ENCODE measurements at regions of chrX and their contacts with region 1.

Region 1: GRCh38 chrX:15202454-15203143 is 67.3 kb downstream of the ASB9 start:
- DNase-seq: no peak
- H3K4me3 Mint-ChIP-seq: no peak overlapping the region
- H3K27ac Mint-ChIP-seq: peak overlapping the region; percentile 76
- H3K4me1 Mint-ChIP-seq: peaks cover 35% of the 10 kb centered on the region
- H3K27me3 Mint-ChIP-seq: peaks cover 9% of the 10 kb centered on the region

Region 2: GRCh38 chrX:13376857-13377549 is 1825.6 kb before region 1 on chrX:
- intact Hi-C with region 1: loop called (anchors 10 kb)
- DNase-seq: no peak
- H3K4me3 Mint-ChIP-seq: no peak overlapping the region
- H3K27ac Mint-ChIP-seq: peak overlapping the region; percentile 27
- H3K4me1 Mint-ChIP-seq: peaks cover 41% of the 10 kb centered on the region
- H3K27me3 Mint-ChIP-seq: no peaks in the 10 kb centered on the region

Region 3: DNA sequence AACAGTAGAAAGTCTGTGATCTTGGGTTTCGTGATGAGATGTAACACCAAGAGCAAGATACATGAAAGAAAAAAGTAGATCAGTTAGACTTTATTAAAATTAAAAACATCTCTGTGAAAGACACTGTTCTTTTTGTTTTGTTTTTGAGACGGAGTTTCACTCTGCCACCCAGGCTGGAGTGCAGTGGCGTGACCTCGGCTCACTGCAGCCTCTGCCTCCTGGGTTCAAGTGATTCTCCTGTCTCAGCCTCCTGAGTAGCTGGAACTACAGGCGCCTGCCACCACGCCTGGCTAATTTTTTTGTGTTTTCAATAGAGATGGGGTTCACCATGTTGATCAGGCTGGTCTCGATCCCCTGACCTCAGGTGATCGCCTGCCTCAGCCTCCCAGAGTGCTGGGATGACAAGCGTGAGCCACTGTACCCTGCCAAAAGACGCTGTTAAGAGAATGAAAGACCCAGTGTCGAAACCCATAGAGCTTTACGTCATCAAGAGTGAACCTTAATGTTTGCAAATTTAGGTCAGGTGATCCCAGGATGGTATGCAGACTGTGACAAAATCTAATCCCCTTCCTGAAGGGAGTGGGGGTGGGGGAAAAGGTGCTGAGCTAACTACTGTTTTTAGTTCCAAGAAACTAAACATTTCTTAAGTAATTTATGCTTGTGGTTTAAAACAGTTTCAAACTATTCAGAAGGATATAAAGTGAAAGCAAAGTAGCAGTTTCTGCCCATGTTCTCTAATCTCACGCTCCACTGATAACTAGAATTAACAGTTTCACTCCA is 1460.0 kb before region 1 on chrX:
- intact Hi-C with region 1: loop called (anchors 5 kb)
- DNase-seq: peak; percentile 8
- H3K4me3 Mint-ChIP-seq: peak overlapping the region; percentile 51
- H3K27ac Mint-ChIP-seq: peak overlapping the region; percentile 55
- H3K4me1 Mint-ChIP-seq: peaks cover 21% of the 10 kb centered on the region
- H3K27me3 Mint-ChIP-seq: no peaks in the 10 kb centered on the region

Region 4: GRCh38 chrX:14209034-14209433 is 993.6 kb before region 1 on chrX:
- intact Hi-C with region 1: no loop called
- DNase-seq: no peak
- H3K4me3 Mint-ChIP-seq: no peak overlapping the region
- H3K27ac Mint-ChIP-seq: no peak overlapping the region
- H3K4me1 Mint-ChIP-seq: no peaks in the 10 kb centered on the region
- H3K27me3 Mint-ChIP-seq: no peaks in the 10 kb centered on the region

Region 5: GRCh38 chrX:14798805-14799397 is 403.7 kb before region 1 on chrX:
- intact Hi-C with region 1: loop called (anchors 5 kb)
- DNase-seq: no peak
- H3K4me3 Mint-ChIP-seq: no peak overlapping the region
- H3K27ac Mint-ChIP-seq: peak overlapping the region; percentile 42
- H3K4me1 Mint-ChIP-seq: peaks cover 8% of the 10 kb centered on the region
- H3K27me3 Mint-ChIP-seq: no peaks in the 10 kb centered on the region

Region 6: GRCh38 chrX:15151267-15152186 is 51.1 kb before region 1 on chrX:
- intact Hi-C with region 1: loop called (anchors 1 kb)
- DNase-seq: peak; percentile 8
- H3K4me3 Mint-ChIP-seq: peak overlapping the region; percentile 57
- H3K27ac Mint-ChIP-seq: peak overlapping the region; percentile 79
- H3K4me1 Mint-ChIP-seq: peaks cover 23% of the 10 kb centered on the region
- H3K27me3 Mint-ChIP-seq: peaks cover 2% of the 10 kb centered on the region

Region 7: GRCh38 chrX:15242899-15243555 is 40.4 kb after region 1 on chrX:
- intact Hi-C with region 1: loop called (anchors 2 kb)
- DNase-seq: no peak
- H3K4me3 Mint-ChIP-seq: no peak overlapping the region
- H3K27ac Mint-ChIP-seq: no peak overlapping the region
- H3K4me1 Mint-ChIP-seq: no peaks in the 10 kb centered on the region
- H3K27me3 Mint-ChIP-seq: no peaks in the 10 kb centered on the region